GM12878 (cell line): ENCODE measurements at regions of chr16 and their contacts with region 1.

Region 1: GRCh38 chr16:74998481-74999218 is at the start of gene ZNRF1:
- DNase-seq: peak; percentile 73
- ATAC-seq: peak; percentile 82
- H3K4me3 ChIP-seq: peak within 1 kb of the TSS; percentile 72
- H3K27ac ChIP-seq: no peak within 1 kb of the TSS
- H3K4me1 ChIP-seq: peaks cover 8% of the 10 kb centered on the region
- H3K27me3 ChIP-seq: no peaks in the 10 kb centered on the region
- CTCF ChIP-seq: peak; percentile 60 to 72 (median 62); a peak in 5 of 6 replicates
- EP300 ChIP-seq: peak; percentile 33 to 81; a peak in 3 of 4 replicates
- POLR2A ChIP-seq: peak; percentile 58
- RAD21 ChIP-seq: peak; percentile 86
- polyA plus RNA-seq, gene ZNRF1: 12.0 to 14.2 TPM

Region 2: GRCh38 chr16:74580833-74581232 is 417.8 kb before region 1 on chr16:
- CTCF ChIA-PET with region 1: no interaction called
- POLR2A ChIA-PET with region 1: no interaction called
- RAD21 ChIA-PET with region 1: no interaction called
- SMC1A ChIA-PET with region 1: no interaction called
- in situ Hi-C with region 1: no loop called
- intact Hi-C with region 1: no loop called
- DNase-seq: peak; percentile 63
- ATAC-seq: peak; percentile 72
- H3K4me3 ChIP-seq: no peak overlapping the region
- H3K27ac ChIP-seq: peak overlapping the region; percentile 47
- H3K4me1 ChIP-seq: peaks cover 24% of the 10 kb centered on the region
- H3K27me3 ChIP-seq: no peaks in the 10 kb centered on the region
- CTCF ChIP-seq: no peak
- EP300 ChIP-seq: peak in 1 of 2 experiments; percentile 53; a peak in 1 of 4 replicates
- POLR2A ChIP-seq: no peak
- RAD21 ChIP-seq: no peak

Region 3: GRCh38 chr16:74984535-74985296 is 13.9 kb before region 1 on chr16 and contains the start of gene WDR59:
- CTCF ChIA-PET with region 1: interaction called, 11 read pairs
- POLR2A ChIA-PET with region 1: interaction called, 5 read pairs
- RAD21 ChIA-PET with region 1: interaction called, 13 read pairs
- SMC1A ChIA-PET with region 1: interaction called, 9 read pairs
- in situ Hi-C with region 1: no loop called
- intact Hi-C with region 1: no loop called
- DNase-seq: peak; percentile 96
- ATAC-seq: peak; percentile 99
- H3K4me3 ChIP-seq: peak within 1 kb of the TSS; percentile 99
- H3K27ac ChIP-seq: peak within 1 kb of the TSS; percentile 92
- H3K4me1 ChIP-seq: no peaks in the 10 kb centered on the region; the same call in 1 of the 2 replicates
- H3K27me3 ChIP-seq: no peaks in the 10 kb centered on the region
- CTCF ChIP-seq: no peak
- EP300 ChIP-seq: no peak
- POLR2A ChIP-seq: peak; percentile 83
- RAD21 ChIP-seq: no peak
- polyA plus RNA-seq, gene WDR59: 9.7 to 11.5 TPM

Region 4: DNA sequence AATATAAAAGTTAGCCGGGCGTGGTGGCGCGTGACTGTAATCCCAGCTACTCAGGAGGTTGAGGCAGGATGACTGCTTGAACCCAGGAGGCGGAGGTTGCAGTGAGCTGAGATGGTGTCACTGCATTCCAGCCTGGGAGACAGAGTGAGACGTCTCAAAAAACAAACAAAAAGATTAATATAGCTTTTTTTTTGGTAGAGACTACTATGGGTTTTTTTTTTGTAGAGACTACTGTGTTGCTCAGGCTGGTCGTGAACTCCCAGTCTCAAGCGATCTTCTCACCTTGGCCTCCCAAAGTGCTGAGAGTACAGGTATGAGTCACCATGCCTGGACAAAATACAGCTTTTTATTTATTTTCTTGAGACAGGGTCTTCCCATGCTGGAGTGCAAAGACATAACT is 20.4 kb after region 1 on chr16:
- CTCF ChIA-PET with region 1: interaction called, 8 read pairs
- POLR2A ChIA-PET with region 1: interaction called, 3 read pairs
- RAD21 ChIA-PET with region 1: interaction called, 38 read pairs
- SMC1A ChIA-PET with region 1: interaction called, 43 read pairs
- in situ Hi-C with region 1: no loop called
- intact Hi-C with region 1: no loop called
- DNase-seq: no peak
- ATAC-seq: peak; percentile 86
- H3K4me3 ChIP-seq: no peak overlapping the region
- H3K27ac ChIP-seq: no peak overlapping the region
- H3K4me1 ChIP-seq: peaks cover 20% of the 10 kb centered on the region
- H3K27me3 ChIP-seq: no peaks in the 10 kb centered on the region
- CTCF ChIP-seq: no peak
- EP300 ChIP-seq: no peak; a peak in 1 of 4 replicates
- POLR2A ChIP-seq: no peak
- RAD21 ChIP-seq: no peak

Region 5: GRCh38 chr16:75074920-75075687 is 76.5 kb after region 1 on chr16:
- CTCF ChIA-PET with region 1: interaction called, 6 read pairs
- POLR2A ChIA-PET with region 1: no interaction called
- RAD21 ChIA-PET with region 1: interaction called, 3 read pairs
- SMC1A ChIA-PET with region 1: interaction called, 4 read pairs
- in situ Hi-C with region 1: no loop called
- intact Hi-C with region 1: loop called (anchors 1 kb)
- DNase-seq: peak; percentile 96
- ATAC-seq: peak; percentile 97
- H3K4me3 ChIP-seq: peak overlapping the region; percentile 41; the same call in 1 of the 2 replicates
- H3K27ac ChIP-seq: peak overlapping the region; percentile 80
- H3K4me1 ChIP-seq: peaks cover 21% of the 10 kb centered on the region
- H3K27me3 ChIP-seq: no peaks in the 10 kb centered on the region
- CTCF ChIP-seq: no peak
- EP300 ChIP-seq: peak; percentile 16 to 22; a peak in 2 of 4 replicates
- POLR2A ChIP-seq: peak; percentile 58
- RAD21 ChIP-seq: 0 out of 2 replicates have a peak, but pooled peaks have one; percentile 18